ENCODE measurements at regions of chr18 and their contacts with region 1.

Region 1: GRCh38 chr18:9428301-9428706 is 47.0 kb upstream of the RALBP1 start:
- DNase-seq: no peak
- ATAC-seq: no peak
- H3K4me3 ChIP-seq: no peak overlapping the region
- H3K27ac ChIP-seq: no peak overlapping the region
- H3K4me1 ChIP-seq: no peaks in the 10 kb centered on the region; the same call in 1 of the 2 replicates
- H3K27me3 ChIP-seq: no peaks in the 10 kb centered on the region
- CTCF ChIP-seq: no peak
- POLR2A ChIP-seq: no peak
- RAD21 ChIP-seq: no peak

Region 2: GRCh38 chr18:8951491-8951890 is 476.8 kb before region 1 on chr18:
- CTCF ChIA-PET with region 1: no interaction called
- POLR2A ChIA-PET with region 1: no interaction called
- dilution Hi-C with region 1: no loop called
- in situ Hi-C with region 1: no loop called
- intact Hi-C with region 1: no loop called
- DNase-seq: no peak
- ATAC-seq: no peak
- H3K4me3 ChIP-seq: no peak overlapping the region
- H3K27ac ChIP-seq: no peak overlapping the region
- H3K4me1 ChIP-seq: peaks cover 18% of the 10 kb centered on the region
- H3K27me3 ChIP-seq: no peaks in the 10 kb centered on the region
- CTCF ChIP-seq: no peak
- POLR2A ChIP-seq: no peak
- RAD21 ChIP-seq: no peak

Region 3: DNA sequence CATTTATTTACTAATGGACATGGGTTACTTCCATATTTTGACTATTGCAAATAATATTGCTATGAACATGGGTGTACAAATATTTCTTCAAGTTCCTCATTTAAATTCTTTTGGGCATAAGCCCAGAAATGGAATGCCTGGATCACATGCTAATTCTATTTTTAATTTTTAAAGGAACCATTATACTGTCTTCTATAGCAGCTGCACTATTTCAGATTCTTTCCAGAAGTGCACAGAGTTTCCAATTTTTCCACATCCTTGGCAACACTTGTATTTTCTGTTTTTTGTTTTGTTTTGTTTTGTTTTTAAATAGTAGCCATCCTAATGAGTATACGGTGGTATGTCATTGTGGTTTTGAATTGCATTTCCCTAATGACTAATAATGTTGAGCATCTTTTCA is 38.5 kb after region 1 on chr18:
- CTCF ChIA-PET with region 1: no interaction called
- POLR2A ChIA-PET with region 1: no interaction called
- dilution Hi-C with region 1: no loop called
- in situ Hi-C with region 1: no loop called
- intact Hi-C with region 1: loop called (anchors 5 kb)
- DNase-seq: no peak
- ATAC-seq: no peak
- H3K4me3 ChIP-seq: no peak overlapping the region
- H3K27ac ChIP-seq: no peak overlapping the region
- H3K4me1 ChIP-seq: no peaks in the 10 kb centered on the region
- H3K27me3 ChIP-seq: no peaks in the 10 kb centered on the region
- CTCF ChIP-seq: no peak
- POLR2A ChIP-seq: no peak
- RAD21 ChIP-seq: no peak

Region 4: GRCh38 chr18:9531791-9532401 is 103.6 kb after region 1 on chr18:
- CTCF ChIA-PET with region 1: no interaction called
- POLR2A ChIA-PET with region 1: no interaction called
- dilution Hi-C with region 1: no loop called
- in situ Hi-C with region 1: no loop called
- intact Hi-C with region 1: no loop called
- DNase-seq: peak; percentile 33
- ATAC-seq: no peak
- H3K4me3 ChIP-seq: no peak overlapping the region
- H3K27ac ChIP-seq: no peak overlapping the region
- H3K4me1 ChIP-seq: peaks cover 13% of the 10 kb centered on the region
- H3K27me3 ChIP-seq: no peaks in the 10 kb centered on the region
- CTCF ChIP-seq: no peak
- POLR2A ChIP-seq: no peak
- RAD21 ChIP-seq: no peak